Head of caudate nucleus (tissue), 42 donors: ENCODE measurements at regions of chr10 and their contacts with region 1.

Region 1: DNA sequence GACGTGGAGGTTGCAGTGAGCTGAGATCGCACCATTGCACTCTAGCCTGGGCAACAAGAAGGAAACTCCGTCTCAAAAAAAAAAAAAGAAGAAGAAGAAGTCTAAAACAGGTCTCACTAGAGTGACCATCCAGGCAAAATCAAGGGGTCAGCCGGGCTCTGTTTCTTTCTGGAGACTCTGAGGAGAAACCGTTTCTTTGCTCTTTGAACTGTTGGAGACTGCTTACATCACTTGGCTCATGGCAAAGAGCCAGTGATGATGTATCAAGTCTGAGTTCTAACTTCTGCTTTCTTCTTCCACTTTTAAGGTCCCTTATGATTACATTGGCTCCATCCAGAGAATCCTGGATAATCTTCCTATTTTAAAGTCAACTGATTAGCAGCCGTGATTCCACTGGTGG is 306.8 kb downstream of the WDR11 start:
- DNase-seq: peak in 15 of 42 donors; percentile 24 to 58 (median 40)

Region 2: DNA sequence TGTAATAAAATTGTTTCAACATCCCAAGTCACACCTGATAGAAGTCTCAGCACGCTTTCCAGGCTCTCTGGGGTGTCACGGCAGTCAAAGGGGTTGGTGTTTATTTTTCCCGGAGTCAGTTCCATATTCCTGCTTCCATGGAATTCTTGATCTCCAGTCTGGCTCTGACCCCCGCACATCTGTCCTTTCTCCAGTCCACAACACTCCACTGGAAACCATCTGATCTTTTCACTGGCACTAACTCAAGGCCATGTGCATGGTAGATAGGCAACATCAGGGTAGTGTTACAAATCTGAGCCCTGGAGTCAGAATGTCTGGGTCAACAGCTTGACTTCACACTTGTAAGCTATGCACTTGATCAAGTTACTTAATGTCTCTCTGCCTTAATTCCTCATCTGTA is 130.6 kb before region 1 on chr10:
- intact Hi-C with region 1: no loop called
- DNase-seq: no peak

Region 3: GRCh38 chr10:121188005-121188404 is 30.0 kb after region 1 on chr10:
- intact Hi-C with region 1: loop called (anchors 2 kb)
- DNase-seq: peak in 28 of 42 donors; percentile 18 to 78 (median 48)

Region 4: DNA sequence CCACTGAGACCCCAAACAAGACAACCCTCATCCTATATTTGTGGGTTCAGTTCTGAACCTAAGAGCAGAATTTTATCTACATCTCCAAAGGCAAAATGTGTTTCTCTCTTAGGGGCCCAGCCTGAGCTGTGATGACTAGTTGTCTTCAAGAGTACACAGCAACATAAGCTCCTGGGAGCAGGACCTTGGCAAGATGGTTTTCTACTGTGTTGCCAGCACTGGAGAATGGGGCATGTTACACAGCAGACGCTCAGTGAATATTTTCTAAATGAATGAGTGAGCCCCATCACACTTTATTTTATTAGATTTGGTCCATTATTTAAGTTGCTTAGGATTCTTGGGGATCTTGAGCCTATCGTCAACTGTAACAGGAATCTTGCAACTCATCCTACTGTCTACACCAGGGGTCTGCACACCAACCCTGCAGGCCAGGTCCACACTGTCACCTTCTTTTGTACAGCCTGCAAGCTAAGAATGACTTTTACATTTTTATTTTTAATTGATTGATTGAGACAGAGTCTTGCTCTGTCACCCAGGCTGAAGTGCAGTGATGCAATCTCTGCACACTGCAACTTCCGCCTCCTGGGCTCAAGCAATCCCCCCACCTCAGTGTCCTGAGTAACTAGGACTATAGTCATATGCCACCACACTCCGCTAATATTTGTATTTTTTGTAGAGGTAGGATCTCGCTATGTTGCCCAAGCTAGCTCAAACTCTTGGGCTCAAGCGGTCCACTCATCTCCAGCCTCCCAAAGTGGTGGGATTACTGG is 93.2 kb after region 1 on chr10:
- intact Hi-C with region 1: no loop called
- DNase-seq: no peak